ENCODE measurements at regions of chr5 and their contacts with region 1.

Region 1: DNA sequence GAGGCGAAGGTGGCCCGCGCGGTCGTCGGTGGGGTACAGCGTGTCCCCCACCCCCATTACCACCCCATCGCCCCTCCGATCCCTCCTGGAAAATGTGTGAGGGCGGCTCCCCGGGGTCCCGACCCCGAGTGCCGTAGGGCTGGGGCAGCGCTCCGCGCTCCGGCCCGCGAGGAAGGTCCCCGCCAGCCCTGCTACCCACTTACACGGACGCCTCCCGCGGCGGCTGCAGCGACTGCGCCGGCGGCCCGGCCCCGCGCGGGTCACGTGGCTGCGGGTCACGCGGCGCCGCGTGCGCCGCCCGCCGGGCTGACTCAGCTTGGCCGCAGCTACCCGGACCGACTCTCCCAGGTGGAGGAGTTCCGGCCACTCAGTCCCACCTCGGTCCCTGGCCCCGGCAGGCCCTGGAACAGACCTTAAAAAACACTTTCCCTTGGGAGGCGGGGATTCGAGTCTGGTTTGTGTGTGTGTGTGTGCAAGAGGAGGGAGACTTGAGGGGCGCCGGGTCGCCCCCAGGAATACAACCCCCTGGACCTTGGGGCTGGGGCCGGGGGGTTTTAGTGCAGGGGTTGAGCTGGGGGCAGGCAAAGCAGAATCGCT is at the start of gene GNPDA1:
- DNase-seq: peak; percentile 73 to 97 (median 80)

Region 2: DNA sequence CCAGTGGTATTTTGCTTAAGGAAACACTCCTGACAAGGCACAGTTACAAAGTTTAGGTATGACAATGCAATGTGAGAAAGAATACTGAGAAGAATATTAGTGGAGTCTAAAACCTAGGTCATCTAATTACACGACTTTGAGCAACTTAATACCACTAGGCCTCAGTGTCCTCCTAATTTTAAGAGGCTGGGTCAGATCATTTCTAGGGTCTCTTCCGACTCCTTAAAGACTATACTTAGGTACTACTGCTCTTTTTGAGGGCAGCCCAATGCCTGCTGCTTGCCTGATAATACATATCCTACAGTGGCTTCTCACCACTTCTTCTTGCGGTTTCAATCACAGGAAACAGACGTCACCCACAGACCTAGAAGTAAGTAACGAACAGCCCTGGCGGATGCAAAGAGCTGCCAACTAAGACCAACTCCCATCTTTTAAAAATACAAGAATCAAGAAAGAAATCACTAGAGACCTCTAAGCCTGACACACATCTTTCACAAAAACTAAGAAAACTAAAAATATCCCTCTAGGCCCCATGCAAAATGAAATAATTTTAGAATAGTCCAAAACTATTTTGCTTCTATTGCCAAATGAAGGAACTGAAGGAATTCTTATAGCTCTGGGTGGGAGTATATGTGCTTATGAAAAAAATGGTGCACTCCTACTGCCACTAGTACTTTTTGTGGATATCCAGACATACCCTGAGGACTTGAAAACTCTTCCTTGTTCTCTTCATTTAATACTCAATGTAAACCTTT is 407.2 kb before region 1 on chr5:
- intact Hi-C with region 1: no loop called
- DNase-seq: no peak

Region 3: DNA sequence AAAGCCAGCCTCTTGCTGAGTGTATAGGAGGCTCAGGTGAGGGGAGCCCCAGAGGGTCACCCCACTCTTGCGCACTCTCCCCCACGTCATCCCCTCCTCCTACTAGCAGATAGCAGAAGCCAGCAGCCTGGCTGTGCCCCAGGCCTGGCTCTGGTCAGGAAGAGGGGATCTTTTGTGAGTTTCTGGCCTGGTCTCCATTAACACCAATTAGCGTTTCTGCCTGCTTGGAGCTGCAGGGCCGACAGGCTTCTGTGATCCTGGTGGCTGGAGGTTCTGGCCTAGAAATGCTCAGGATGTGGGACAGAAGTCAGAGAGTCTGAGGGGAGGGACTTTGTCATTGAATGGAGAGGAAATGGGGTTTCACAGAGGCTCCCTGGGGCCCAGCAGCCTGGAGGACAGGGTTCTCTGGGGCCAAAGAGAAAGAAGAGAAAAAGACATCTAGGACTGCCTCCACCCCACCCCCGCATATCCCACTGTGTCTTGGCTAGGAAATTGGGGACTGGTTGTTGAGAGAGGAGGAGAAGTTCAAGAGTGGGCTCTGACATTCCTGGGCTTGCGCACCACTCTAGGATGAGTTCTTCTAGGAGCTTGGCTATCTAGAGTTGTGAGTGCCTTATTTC is 283.4 kb before region 1 on chr5:
- intact Hi-C with region 1: no loop called
- DNase-seq: peak in 6 of 10 donors; percentile 18 to 82 (median 37)

Region 4: GRCh38 chr5:142063878-142064331 is 51.0 kb after region 1 on chr5:
- intact Hi-C with region 1: loop called (anchors 1 kb)
- DNase-seq: peak; percentile 94 to 99 (median 96)

Region 5: DNA sequence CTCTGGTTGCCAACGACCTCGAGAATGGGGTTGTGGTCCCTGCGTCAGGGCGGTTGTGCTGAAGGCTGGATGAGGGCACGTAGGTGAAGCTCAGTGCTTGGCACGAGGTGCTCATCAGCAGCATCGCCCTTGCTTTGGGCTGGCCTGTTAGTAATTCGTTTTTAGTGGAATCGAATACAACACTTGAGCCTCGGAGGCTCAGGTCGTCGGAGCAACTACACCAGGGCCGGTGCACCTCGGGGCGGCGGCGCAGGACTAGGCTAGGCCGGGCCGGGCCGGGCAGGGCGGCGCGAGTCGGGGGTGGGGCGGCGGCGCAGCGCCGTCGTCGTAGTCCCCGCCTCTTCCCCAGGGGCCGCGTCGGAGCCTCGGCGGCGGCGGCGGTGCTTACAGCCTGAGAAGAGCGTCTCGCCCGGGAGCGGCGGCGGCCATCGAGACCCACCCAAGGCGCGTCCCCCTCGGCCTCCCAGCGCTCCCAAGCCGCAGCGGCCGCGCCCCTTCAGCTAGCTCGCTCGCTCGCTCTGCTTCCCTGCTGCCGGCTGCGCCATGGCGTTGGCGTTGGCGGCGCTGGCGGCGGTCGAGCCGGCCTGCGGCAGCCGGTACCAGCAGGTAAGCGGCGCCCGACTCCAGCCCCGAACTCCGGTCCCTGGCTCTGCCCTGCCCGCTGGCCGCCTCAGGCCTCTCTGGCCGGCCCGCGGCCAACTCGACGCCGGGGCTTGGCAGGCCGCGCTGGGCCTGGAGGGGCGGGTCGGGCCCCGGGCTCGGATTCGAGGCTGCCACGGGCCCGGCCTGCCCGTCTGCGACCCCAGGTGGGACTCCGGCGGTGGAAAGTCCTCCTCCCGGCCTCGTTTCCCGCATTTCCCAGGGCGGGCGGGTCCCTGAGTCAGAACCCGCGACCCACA is 95.8 kb after region 1 on chr5 and contains the start of gene NDFIP1:
- intact Hi-C with region 1: loop called (anchors 1 kb)
- DNase-seq: peak; percentile 66 to 97 (median 82)

Region 6: GRCh38 chr5:142145106-142145900 is 132.4 kb after region 1 on chr5:
- intact Hi-C with region 1: loop called (anchors 2 kb)
- DNase-seq: peak in 5 of 10 donors; percentile 36 to 55 (median 42)

Region 7: GRCh38 chr5:142486581-142486980 is 473.7 kb after region 1 on chr5:
- intact Hi-C with region 1: no loop called
- DNase-seq: no peak

Measured in posterior cingulate gyrus (tissue), 11 donors.